ENCODE measurements at regions of chr17 and their contacts with region 1.

Region 1: GRCh38 chr17:29369831-29370735 is 20.1 kb upstream of the TAOK1 start:
- DNase-seq: peak; percentile 83
- ATAC-seq: peak; percentile 99
- H3K4me3 ChIP-seq: peak overlapping the region; percentile 4 to 42; a peak in 3 of 4 replicates
- H3K27ac ChIP-seq: no peak overlapping the region
- H3K4me1 ChIP-seq: 0 out of 2 replicates have a peak, but pooled peaks cover 5% of the 10 kb centered on the region
- H3K27me3 ChIP-seq: no peaks in the 10 kb centered on the region
- CTCF ChIP-seq: peak; percentile 88

Region 2: DNA sequence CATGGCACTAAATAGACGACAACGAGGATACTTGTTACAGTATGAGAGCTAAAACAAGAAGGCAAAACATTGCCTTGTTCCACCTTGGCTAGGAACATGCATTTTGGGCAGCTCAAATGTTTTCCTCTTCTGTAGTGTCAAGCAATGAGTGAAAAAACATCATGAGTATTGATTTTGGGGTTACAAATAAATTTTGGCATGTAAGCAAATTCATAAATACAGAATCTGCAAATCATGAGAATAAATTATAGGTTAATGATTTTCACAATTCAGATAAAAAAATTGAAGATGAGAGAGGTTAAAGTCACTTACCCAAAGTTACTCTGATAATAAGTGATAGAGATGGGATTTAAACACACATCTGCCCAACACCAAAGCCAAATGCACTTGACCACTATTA is 47.7 kb before region 1 on chr17:
- CTCF ChIA-PET with region 1: no interaction called
- POLR2A ChIA-PET with region 1: interaction called, 12 read pairs
- in situ Hi-C with region 1: no loop called
- intact Hi-C with region 1: no loop called
- DNase-seq: no peak
- ATAC-seq: no peak
- H3K4me3 ChIP-seq: no peak overlapping the region
- H3K27ac ChIP-seq: no peak overlapping the region
- H3K4me1 ChIP-seq: no peaks in the 10 kb centered on the region
- H3K27me3 ChIP-seq: no peaks in the 10 kb centered on the region; the same call in 1 of the 2 replicates
- CTCF ChIP-seq: no peak

Region 3: DNA sequence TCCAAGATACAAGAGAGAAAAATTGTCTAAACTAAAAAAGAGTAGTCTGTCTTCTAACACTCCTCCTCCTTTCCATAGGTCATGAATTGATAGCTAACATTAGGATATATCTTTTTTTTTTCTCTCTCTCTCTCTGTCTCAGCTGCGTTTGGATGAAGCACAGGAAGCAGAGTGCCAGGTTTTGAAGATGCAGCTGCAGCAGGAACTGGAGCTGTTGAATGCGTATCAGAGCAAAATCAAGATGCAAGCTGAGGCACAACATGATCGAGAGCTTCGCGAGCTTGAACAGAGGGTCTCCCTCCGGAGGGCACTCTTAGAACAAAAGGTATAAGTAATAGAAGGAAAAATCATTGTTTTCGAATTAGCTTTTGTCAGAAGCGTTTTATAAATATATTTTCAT is 163.9 kb after region 1 on chr17:
- CTCF ChIA-PET with region 1: interaction called, 8 read pairs
- POLR2A ChIA-PET with region 1: no interaction called
- in situ Hi-C with region 1: no loop called
- intact Hi-C with region 1: loop called (anchors 1 kb)
- DNase-seq: no peak
- ATAC-seq: no peak
- H3K4me3 ChIP-seq: no peak overlapping the region
- H3K27ac ChIP-seq: no peak overlapping the region
- H3K4me1 ChIP-seq: no peaks in the 10 kb centered on the region
- H3K27me3 ChIP-seq: no peaks in the 10 kb centered on the region
- CTCF ChIP-seq: no peak